Right ventricle myocardium superior (tissue), 1 donor: ENCODE measurements at regions of chr16 and their contacts with region 1.

Region 1: GRCh38 chr16:58129097-58129936 is at the start of gene CFAP20:
- DNase-seq: peak; percentile 98
- ATAC-seq: peak; percentile 96
- total RNA-seq, gene CFAP20: 34.2 TPM

Region 2: DNA sequence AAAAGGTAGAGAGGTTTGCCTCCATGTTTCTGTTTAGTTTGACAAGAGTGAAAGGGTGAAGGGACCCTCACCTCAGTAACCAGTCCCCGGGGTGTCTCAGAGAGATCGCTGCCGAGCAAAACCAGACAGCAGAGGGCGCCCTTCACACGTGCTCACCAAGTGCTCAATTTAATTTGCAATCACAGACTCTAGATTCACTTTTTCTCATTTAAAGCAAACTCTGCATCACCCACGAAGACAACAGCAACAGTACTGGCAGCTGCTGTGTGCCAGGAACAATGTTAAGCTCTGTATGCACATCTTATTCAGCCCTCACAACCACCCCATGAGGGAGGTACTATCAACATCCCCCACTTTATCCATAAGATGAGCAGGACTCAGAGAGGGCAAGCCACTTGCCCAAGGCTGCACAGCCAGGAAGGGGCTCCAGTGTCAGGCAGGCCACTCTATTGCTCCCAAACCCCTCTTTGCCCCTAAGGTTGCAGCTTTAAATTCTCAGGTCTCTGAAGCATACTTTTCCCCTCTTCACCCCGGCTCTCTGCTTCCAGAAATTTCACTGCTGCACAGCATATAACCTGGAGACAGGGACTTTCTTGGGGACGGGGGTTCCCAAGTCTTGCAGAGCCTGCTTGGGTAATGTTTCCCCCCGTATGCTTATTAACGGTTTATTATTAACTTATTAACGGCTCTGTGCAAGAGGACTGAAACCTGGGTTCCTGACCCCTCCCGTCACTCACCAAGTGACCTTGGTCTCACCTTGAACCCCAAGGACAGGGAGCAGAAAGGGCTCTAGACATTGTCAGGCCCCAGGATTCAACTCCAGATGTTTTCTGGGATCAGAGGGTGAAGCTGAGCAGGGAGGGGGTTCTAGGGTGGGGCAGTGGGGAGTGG is 229.3 kb before region 1 on chr16:
- intact Hi-C with region 1: loop called (anchors 10 kb)
- DNase-seq: peak; percentile 88
- ATAC-seq: peak; percentile 90

Region 3: GRCh38 chr16:58085584-58086251 is 43.6 kb before region 1 on chr16:
- intact Hi-C with region 1: no loop called
- DNase-seq: peak; percentile 13
- ATAC-seq: no peak